Calu3 (cell line): ENCODE measurements at regions of chr3 and their contacts with region 1.

Region 1: DNA sequence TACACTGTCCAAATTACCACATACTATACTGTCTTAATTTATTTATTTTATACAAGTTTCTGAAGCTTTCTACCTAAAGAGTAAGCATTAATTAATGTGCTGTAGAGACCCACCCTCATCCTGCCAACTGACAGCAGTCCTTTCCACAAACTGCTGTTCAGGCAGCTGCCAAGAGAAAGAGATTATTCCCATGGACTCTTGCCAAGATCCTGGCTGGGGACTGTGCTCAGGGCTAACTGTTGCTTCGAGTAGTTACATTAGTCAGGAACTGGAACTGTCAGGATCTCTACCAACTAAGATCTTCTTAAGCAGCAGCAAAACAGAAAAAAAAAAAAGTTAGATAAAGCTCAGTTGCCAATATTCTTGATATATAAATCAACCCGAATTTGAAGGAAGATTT is 398.8 kb downstream of the MECOM start:
- DNase-seq: peak; percentile 61
- H3K4me3 Mint-ChIP-seq: no peak overlapping the region
- H3K27ac Mint-ChIP-seq: no peak overlapping the region
- H3K4me1 Mint-ChIP-seq: peaks cover 57% of the 10 kb centered on the region
- H3K27me3 Mint-ChIP-seq: no peaks in the 10 kb centered on the region
- CTCF ChIP-seq: no peak

Region 2: DNA sequence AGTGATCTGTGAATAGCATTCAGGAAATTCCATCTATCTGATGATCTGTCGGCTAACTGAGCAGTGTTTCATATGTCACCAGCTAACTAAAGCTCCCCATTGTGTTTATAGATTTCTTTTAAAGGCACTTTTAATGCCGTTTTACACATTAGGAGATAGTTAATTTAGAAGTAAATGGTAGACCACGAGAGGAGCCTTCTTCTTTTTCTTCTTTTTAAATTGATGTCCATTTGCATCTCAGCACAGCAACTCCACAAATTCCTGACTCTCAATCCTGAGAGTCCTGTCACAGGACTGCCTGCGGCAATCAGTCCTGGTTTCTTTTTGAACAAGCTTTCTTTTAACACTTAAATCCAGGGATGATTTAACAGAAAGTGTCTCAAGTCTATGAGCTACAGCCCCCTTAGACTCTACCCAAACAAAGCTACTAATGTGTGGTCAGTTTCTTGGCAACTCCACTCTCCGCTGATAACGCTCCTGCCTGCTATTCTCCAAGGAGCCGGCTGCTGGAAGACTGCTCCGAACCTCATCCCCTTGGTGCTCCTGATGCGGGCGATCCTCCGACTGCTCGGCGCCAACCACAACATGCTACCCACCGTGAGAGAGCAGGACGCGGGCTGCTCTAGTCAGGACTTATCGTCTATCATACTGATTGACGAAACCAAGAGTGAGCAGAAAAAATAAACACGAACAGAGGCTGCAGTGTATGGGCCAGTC is 22.6 kb before region 1 on chr3:
- CTCF ChIA-PET with region 1: interaction called, 10 read pairs
- intact Hi-C with region 1: no loop called
- DNase-seq: peak; percentile 52
- H3K4me3 Mint-ChIP-seq: peak overlapping the region; percentile 78
- H3K27ac Mint-ChIP-seq: peak overlapping the region; percentile 90
- H3K4me1 Mint-ChIP-seq: peaks cover 52% of the 10 kb centered on the region
- H3K27me3 Mint-ChIP-seq: no peaks in the 10 kb centered on the region
- CTCF ChIP-seq: no peak

Region 3: DNA sequence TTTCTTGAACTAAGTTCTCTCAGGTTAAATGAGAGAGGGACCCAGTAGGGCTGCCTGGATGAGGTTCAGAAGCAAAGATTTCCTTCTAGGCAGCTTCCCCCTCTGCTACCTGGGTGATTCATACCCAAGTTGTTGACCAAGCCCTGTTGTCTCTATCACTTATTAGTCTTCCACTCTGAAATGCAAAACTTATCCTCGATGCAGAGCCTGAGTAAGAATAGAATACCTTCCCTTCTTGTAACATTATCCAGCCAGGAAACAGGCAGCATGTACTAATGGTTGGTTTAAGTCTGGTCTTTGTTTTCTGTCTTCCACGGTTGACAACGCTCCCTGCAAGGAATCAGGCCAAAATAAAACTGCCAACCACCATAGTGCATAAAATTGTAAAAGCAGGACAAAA is 21.5 kb after region 1 on chr3:
- CTCF ChIA-PET with region 1: no interaction called
- intact Hi-C with region 1: loop called (anchors 2 kb)
- DNase-seq: peak; percentile 66
- H3K4me3 Mint-ChIP-seq: peak overlapping the region; percentile 68
- H3K27ac Mint-ChIP-seq: peak overlapping the region; percentile 98
- H3K4me1 Mint-ChIP-seq: peaks cover 54% of the 10 kb centered on the region
- H3K27me3 Mint-ChIP-seq: no peaks in the 10 kb centered on the region
- CTCF ChIP-seq: no peak

Region 4: DNA sequence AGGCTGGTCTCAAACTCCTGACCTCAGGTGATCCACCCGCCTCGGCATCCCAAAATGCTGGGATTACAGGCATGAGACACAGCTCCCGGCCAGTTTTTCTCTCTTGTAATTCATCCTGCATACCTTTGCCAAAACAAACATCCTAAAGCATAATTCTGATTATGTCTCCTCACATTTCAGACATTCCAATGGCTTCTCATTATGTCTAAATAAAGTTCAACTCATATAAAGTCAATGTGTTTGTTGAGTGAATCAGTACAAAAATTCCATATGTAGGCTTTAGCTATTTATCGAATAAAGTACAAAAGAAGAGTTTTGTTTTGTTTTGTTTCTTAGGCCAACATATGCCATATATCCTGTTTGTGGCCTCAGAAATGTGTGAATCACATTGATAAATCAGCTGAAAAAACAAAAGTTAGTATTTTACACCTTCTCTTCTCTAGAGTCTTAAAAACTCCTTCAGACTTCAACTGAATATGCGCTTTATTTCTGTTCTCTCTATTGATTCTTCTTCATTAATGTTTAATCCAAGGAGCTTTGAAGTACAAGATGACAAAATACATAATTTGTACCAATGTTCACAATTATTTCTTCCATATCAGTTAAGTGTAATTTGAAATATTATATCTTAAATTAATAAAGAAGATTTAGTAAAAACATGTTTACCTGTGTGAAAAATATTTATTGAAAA is 233.0 kb after region 1 on chr3:
- CTCF ChIA-PET with region 1: no interaction called
- intact Hi-C with region 1: no loop called
- DNase-seq: peak; percentile 53
- H3K4me3 Mint-ChIP-seq: peak overlapping the region; percentile 22
- H3K27ac Mint-ChIP-seq: peak overlapping the region; percentile 82
- H3K4me1 Mint-ChIP-seq: peaks cover 65% of the 10 kb centered on the region
- H3K27me3 Mint-ChIP-seq: no peaks in the 10 kb centered on the region
- CTCF ChIP-seq: no peak